Psoas muscle (tissue), 8 donors: ENCODE measurements at regions of chr12 and their contacts with region 1.

Region 1: GRCh38 chr12:49515266-49515665 is 23.6 kb upstream of the KCNH3 start:
- DNase-seq: no peak
- ATAC-seq: no peak
- H3K4me3 ChIP-seq: no peak overlapping the region
- H3K27ac ChIP-seq: no peak overlapping the region
- H3K4me1 ChIP-seq: no peaks in the 10 kb centered on the region
- H3K27me3 ChIP-seq: no peaks in the 10 kb centered on the region
- CTCF ChIP-seq: no peak

Region 2: DNA sequence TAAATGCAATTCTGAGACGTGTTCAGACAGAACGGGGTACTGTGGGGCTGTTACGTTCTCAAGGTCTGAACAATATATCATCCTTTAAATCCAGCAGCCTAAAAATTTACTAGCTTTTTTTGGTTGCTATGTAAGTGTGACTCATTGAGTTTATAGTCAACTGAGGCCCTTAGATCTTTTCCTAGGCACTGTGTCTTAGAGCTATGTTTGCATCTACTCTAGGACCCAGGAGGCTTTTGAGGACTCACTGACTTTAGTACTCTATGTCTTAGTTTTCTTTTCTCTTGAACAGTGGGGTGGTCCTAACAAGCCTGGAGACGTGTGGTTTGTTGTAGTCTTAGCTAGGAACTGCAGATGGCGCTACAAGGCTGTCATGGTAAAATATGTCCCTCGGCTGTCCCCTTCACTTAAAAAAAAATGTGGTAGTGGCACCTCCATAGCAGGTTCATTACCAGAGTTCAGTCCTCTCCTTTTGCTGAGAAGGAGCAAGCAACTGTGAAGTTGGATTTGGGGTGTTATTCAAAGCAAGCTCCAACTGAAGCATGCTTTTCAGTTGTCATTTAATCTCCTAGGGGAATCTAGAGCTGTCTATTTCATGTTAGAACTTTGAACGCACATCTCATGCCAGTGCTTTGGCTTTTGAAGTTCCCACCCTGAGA is 156.7 kb before region 1 on chr12:
- intact Hi-C with region 1: loop called (anchors 1 to 2 kb)
- DNase-seq: no peak
- ATAC-seq: peak; percentile 74 to 98 (median 90)
- H3K4me3 ChIP-seq: no peak overlapping the region
- H3K27ac ChIP-seq: no peak overlapping the region
- H3K4me1 ChIP-seq: peaks cover 4% of the 10 kb centered on the region
- H3K27me3 ChIP-seq: peaks cover 0 to 4% (median 0%) of the 10 kb centered on the region in 3 donors
- CTCF ChIP-seq: peak; percentile 79

Region 3: DNA sequence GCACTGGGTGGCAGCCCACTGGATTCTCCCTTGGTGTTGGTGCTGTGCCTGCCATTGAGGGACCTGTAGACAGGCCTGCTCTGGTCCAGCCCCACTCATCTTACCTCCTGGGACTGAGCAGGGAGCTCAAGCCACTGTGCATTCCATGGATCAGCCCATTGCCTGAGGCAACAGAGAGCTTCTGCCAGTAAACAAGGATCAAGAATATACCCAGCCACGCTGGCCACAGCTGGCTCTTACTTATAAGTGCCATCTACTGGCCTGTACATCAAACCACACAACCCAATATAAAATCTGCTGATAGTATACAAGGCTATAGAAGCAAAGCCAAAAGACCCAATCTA is 94.5 kb after region 1 on chr12:
- intact Hi-C with region 1: no loop called
- DNase-seq: no peak
- ATAC-seq: no peak
- H3K4me3 ChIP-seq: no peak overlapping the region
- H3K27ac ChIP-seq: no peak overlapping the region
- H3K4me1 ChIP-seq: no peaks in the 10 kb centered on the region
- H3K27me3 ChIP-seq: no peaks in the 10 kb centered on the region
- CTCF ChIP-seq: no peak